ENCODE measurements at regions of chr18 and their contacts with region 1.

Region 1: DNA sequence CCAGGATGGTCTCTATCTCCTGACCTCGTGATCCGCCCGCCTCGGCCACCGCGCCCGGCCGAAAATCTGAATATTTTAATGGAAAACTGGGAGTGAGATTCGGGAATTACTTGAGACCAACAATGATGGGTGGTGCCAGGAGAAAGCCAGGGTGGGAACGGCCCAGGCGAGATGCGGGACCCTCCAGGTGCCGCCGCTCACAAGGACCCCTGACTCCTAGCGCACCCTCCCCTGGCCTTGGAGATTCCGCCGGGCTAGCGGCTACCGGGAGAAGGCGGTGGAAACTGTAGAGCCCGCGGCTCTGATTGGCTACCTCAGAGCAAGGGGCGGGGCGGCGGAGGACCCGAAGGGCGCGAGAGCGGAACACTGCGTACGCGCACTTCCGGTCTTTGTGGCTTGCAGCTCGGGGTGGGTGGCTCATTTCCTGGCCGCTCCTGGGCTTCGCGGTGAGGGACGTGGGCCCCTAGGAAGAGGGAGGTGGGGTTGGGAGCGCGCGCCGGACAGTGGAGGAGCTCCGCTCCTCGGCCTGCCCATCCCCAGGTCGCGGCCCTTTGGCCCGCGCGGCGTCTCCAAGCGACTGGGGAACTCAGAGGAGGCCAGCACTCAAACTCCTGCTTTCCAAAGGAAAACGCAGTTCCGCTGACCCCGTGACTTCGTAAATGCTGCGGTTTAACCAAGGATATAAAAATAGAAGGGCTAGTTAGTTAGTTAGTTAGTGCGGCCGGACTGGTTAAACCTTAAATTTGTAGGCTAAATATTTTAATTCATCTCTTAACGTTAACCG is at the start of gene ZNF397:
- DNase-seq: peak; percentile 92
- H3K4me3 ChIP-seq: peak within 1 kb of the TSS; percentile 92
- H3K27ac ChIP-seq: peak within 1 kb of the TSS; percentile 59
- H3K4me1 ChIP-seq: peaks cover 5% of the 10 kb centered on the region
- CTCF ChIP-seq: no peak
- total RNA-seq, gene ZNF397: 8.0 and 11.8 TPM in 2 replicates

Region 2: DNA sequence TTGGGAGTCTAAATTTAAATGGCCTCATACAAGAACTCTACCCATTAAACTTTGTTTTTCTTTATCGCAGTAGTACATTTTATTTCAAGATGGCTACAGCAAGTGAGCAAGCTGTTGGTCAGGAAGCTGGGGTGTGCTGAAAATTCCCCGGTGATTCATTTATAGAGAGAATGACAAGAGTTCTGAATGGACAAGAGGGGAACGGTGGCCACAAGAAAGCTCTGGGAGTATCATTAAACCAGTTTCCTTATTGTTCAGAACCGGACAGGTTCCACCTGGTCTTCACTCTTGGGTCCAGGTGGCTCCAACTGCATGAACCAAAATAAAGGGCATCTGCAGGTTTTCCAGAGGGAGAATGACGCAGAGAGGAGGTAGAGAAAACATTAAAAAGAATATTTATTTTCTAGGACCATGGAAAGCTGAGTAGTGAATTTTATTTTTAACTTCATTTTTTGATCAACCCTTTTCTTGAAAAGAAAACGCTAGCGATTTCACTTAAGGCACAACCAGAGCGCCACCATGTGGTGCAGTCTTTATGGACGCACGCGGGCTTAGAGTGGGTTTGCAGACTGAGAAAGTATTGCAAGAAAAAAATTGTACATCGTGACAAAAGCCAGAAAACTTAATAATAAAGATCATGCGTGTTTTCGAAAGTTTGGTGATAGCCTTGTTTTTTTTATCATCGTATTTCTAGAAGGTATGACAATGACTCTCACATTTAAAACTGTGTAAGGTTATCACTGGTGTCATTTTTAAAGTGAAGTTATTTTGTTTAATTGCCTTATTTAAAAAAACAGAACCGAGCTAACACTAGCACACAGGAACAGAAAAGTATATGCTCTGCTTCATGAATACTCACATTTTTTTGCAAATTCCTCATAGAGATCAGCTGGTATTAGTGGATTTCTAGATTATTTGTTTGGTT is 918.2 kb before region 1 on chr18:
- CTCF ChIA-PET with region 1: no interaction called
- POLR2A ChIA-PET with region 1: no interaction called
- intact Hi-C with region 1: no loop called
- DNase-seq: peak; percentile 66
- H3K4me3 ChIP-seq: no peak overlapping the region
- H3K27ac ChIP-seq: no peak overlapping the region
- H3K4me1 ChIP-seq: no peaks in the 10 kb centered on the region
- CTCF ChIP-seq: peak; percentile 79

Region 3: GRCh38 chr18:35227254-35227653 is 13.6 kb before region 1 on chr18:
- CTCF ChIA-PET with region 1: no interaction called
- POLR2A ChIA-PET with region 1: no interaction called
- intact Hi-C with region 1: no loop called
- DNase-seq: no peak
- H3K4me3 ChIP-seq: no peak overlapping the region
- H3K27ac ChIP-seq: no peak overlapping the region
- H3K4me1 ChIP-seq: no peaks in the 10 kb centered on the region
- CTCF ChIP-seq: no peak

Region 4: GRCh38 chr18:35343936-35344735 is 103.3 kb after region 1 on chr18 and contains the start of gene ZNF24:
- CTCF ChIA-PET with region 1: no interaction called
- POLR2A ChIA-PET with region 1: interaction called, 8 read pairs
- intact Hi-C with region 1: loop called (anchors 5 kb)
- DNase-seq: peak; percentile 88
- H3K4me3 ChIP-seq: peak within 1 kb of the TSS; percentile 92
- H3K27ac ChIP-seq: peak within 1 kb of the TSS; percentile 83
- H3K4me1 ChIP-seq: peaks cover 24% of the 10 kb centered on the region
- CTCF ChIP-seq: no peak
- total RNA-seq, gene ZNF24: 13.6 and 16.7 TPM in 2 replicates